Dorsolateral prefrontal cortex (tissue), 120 donors: ENCODE measurements at regions of chr18 and their contacts with region 1.

Region 1: DNA sequence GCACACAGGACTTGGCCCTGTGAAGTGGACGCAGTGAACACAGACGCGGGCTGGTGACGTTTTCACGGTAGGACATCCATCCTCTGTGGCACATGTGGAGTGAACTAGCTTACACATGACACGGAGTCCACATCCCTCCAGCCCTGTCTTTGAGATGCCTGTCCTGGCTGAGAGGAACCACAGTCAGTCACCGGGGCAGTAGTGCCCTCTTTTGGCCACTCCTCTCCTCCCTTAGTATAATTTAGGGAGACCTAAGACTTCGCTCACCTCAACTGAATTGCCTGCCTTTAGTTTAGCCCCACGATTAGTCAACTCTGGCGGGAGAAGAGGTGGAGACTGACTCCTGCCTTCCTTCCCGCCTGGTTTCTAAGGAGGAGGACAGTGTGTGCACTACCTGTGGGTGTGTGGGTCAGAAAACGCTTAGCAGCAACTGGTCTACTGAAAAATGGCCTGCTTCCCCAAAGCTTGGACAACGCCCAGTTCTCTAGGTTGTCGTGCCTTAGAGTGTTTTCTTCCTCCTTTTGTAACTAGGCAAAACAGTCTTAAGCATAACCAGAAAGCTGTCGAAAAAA is 70.6 kb downstream of the MBP start:
- DNase-seq: peak in 2 of 10 donors; percentile 64 to 73
- H3K4me3 ChIP-seq: no peak overlapping the region
- H3K27ac ChIP-seq: peak overlapping the region in 40 of 59 donors; percentile 0 to 83 (median 40)
- H3K27me3 ChIP-seq: no peaks in the 10 kb centered on the region
- CTCF ChIP-seq: peak in 54 of 56 donors; percentile 17 to 77 (median 53)

Region 2: DNA sequence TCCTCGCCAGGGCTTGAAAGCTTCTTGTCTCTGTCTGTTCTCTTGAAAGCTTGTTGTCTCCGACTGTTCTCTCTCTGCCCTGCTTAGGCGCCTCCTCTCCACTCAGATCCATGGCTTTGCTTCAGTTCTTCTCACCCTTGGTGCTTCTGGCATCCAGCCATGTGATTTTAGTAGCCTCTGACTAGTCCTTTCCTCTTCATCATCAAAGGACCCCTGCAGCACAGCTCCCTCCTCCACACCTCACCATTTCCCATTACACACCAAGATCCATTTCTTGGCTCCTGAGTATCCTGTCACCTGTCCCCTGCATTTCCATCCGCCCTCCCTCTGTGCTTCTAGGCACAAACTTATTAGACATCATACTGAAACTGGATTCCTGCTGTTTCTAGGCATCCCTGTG is 180.3 kb before region 1 on chr18:
- intact Hi-C with region 1: loop called in 1 of 2 experiments (anchors 5 kb)
- DNase-seq: peak in 1 of 10 donors; percentile 14
- H3K4me3 ChIP-seq: no peak overlapping the region
- H3K27ac ChIP-seq: peak overlapping the region in 52 of 59 donors; percentile 0 to 83 (median 64)
- H3K27me3 ChIP-seq: no peaks in the 10 kb centered on the region
- CTCF ChIP-seq: no peak

Region 3: DNA sequence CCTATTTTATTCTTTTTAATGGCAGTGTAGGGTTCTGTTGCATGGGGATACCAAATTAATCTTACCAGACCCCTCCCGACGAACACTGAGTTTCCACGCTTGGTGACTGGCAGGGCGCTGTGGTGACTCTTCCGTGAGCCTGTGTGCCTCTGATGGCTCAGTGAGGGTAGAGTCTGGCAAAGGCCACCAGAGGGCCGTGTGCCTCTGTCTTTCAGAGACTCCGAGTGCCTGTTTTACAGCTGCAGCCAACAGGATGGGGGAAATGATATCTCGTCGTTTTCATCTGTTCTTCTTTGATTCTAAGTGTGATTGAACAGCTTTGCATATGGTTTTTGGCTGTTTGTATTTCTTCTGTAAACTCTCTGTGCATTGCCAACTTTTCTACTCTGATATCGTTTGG is 139.9 kb before region 1 on chr18:
- intact Hi-C with region 1: loop called (anchors 2 to 5 kb)
- DNase-seq: peak in 9 of 10 donors; percentile 59 to 81 (median 75)
- H3K4me3 ChIP-seq: no peak overlapping the region
- H3K27ac ChIP-seq: peak overlapping the region in 2 of 59 donors; percentile 2 to 14
- H3K27me3 ChIP-seq: no peaks in the 10 kb centered on the region
- CTCF ChIP-seq: peak; percentile 33 to 98 (median 79)

Region 4: GRCh38 chr18:77000527-77000926 is 61.5 kb before region 1 on chr18:
- intact Hi-C with region 1: no loop called
- DNase-seq: peak in 7 of 10 donors; percentile 37 to 70 (median 51)
- H3K4me3 ChIP-seq: peak overlapping the region in 49 of 59 donors; percentile 7 to 84 (median 37)
- H3K27ac ChIP-seq: peak overlapping the region in 51 of 59 donors; percentile 7 to 99 (median 63)
- H3K27me3 ChIP-seq: no peaks in the 10 kb centered on the region
- CTCF ChIP-seq: peak; percentile 87 to 100 (median 95)

Region 5: DNA sequence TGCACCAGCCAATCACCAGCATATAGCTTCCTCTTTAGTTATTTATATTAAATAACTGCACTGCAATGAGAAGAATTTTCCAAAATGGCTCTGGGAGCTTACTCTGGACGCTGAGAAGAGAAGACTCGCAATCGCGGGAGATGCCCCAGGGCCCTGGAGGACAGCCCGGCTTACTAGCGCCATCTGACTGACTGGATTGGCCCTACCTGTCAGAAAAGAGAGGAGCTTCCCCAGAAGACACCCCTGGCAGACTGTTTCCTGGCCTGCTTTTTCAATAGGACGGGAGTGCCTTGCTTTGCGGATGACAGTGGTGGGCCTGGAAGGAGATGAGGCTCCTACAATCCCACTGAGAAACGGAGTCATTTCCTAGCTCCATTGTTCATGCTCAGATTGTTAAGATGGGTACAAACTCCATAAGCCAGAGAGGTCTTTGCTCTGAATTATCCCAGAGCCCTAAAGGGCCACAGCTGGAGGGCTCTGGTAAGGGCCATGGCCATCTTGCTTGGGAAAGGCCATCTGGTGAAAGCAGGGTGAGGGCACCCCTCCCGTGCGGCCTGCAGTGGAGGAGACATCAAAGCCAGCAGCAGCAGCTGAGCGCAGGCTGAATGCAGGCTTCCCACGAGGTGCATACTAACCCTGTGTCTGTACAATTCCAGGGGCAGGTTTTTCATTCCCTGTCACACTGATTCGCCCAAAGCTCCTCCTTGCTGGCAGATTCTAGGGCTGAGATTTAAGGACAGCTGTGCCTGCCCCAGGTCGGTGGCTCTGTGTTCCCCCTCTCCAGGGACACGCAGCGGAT is 279.7 kb after region 1 on chr18:
- intact Hi-C with region 1: no loop called
- DNase-seq: no peak
- H3K4me3 ChIP-seq: no peak overlapping the region
- H3K27ac ChIP-seq: no peak overlapping the region
- H3K27me3 ChIP-seq: peaks cover 0 to 18% (median 0%) of the 10 kb centered on the region in 45 donors
- CTCF ChIP-seq: no peak

Region 6: DNA sequence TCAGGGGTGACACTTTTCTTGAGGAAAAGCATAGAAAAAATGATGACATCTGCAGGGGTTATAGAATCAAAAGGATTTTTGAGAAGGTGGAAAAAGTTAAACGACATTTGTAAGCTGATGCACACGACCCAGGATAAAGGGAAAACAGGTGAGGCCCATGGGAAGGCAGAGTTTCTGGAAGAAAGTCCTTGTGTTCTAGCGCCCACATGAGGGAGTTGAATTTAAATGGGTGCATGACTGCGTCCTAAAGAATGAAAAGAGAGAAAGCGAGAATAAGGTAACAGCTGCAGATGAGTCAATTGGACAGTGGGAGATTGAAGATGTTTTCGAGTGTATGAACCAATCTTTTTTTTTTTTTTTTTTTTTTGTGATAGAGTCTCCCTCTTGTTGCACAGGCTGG is 345.7 kb after region 1 on chr18:
- intact Hi-C with region 1: no loop called
- DNase-seq: no peak
- H3K4me3 ChIP-seq: no peak overlapping the region
- H3K27ac ChIP-seq: no peak overlapping the region
- H3K27me3 ChIP-seq: no peaks in the 10 kb centered on the region
- CTCF ChIP-seq: no peak